ENCODE measurements at regions of chr22 and their contacts with region 1.

Region 1: GRCh38 chr22:40044102-40044869 is 49.5 kb downstream of the FAM83F start:
- DNase-seq: peak; percentile 96 to 99 (median 98)
- H3K4me3 ChIP-seq: peak overlapping the region; percentile 88
- H3K27ac ChIP-seq: peak overlapping the region; percentile 82 to 96
- H3K4me1 ChIP-seq: no peaks in the 10 kb centered on the region
- H3K27me3 ChIP-seq: no peaks in the 10 kb centered on the region
- CTCF ChIP-seq: no peak
- EP300 ChIP-seq: peak; percentile 5
- POLR2A ChIP-seq: peak; percentile 65

Region 2: GRCh38 chr22:40107851-40108378 is 63.6 kb after region 1 on chr22:
- intact Hi-C with region 1: no loop called
- DNase-seq: no peak
- H3K4me3 ChIP-seq: peak overlapping the region; percentile 0
- H3K27ac ChIP-seq: peak overlapping the region in 1 of 2 donors; percentile 39
- H3K4me1 ChIP-seq: peaks cover 14% of the 10 kb centered on the region
- H3K27me3 ChIP-seq: no peaks in the 10 kb centered on the region
- CTCF ChIP-seq: no peak
- EP300 ChIP-seq: no peak
- POLR2A ChIP-seq: no peak

Region 3: GRCh38 chr22:40183029-40183581 is 138.8 kb after region 1 on chr22:
- intact Hi-C with region 1: loop called in 1 of 4 experiments (anchors 10 kb)
- DNase-seq: no peak
- H3K4me3 ChIP-seq: no peak overlapping the region
- H3K27ac ChIP-seq: no peak overlapping the region
- H3K4me1 ChIP-seq: peaks cover 16% of the 10 kb centered on the region
- H3K27me3 ChIP-seq: no peaks in the 10 kb centered on the region
- CTCF ChIP-seq: no peak
- EP300 ChIP-seq: no peak
- POLR2A ChIP-seq: no peak

Region 4: DNA sequence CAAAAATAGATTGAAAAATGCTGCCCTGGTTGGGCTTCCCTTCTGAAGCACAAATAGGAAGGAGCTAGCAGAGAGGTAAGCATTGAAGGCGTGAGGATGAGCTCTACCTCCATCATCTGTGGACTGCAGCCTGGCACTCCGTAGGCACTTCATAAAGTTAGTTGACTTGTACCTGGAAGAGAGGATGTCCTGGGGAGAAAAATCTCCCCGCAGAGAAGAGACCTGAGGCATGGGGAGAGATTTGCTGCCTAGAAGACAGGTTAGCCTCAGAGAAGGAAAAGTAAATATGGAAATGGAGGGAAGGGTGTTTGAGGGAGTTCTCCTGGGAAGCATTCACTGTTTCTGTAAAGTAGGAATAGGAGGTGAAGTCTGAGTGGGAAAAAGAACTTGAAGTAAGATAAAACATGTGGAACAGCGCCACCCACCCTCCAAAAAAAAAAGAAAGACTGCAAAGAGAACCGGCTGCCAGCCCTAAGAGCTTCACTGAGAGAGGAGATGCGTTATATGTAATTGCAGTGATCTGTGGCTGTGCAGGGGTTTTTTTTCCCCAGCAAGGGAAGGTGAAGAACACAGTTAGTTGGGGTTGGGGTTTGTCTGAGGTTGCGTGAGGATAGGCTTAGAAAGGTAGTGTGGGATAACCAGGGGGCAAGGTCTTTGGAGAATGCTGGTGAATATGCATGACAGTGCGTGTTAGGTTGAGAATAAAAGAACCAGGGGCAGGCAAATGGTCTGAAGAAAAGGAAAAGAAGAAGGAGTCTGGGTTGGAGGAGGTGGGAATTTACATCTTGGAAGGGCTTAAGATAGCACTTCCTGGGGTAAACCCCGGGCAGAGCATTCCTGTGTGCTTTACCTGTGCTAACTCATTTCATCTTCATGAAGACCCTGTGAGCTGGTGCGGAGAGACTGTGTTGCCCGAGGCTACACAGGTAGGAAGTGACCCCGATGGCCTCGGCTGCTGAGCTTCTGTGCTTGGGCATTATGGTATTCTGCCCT is 149.4 kb after region 1 on chr22:
- intact Hi-C with region 1: loop called in 2 of 4 experiments (anchors 10 kb)
- DNase-seq: peak in 1 of 5 donors; percentile 34
- H3K4me3 ChIP-seq: no peak overlapping the region
- H3K27ac ChIP-seq: no peak overlapping the region
- H3K4me1 ChIP-seq: peaks cover 25% of the 10 kb centered on the region
- H3K27me3 ChIP-seq: no peaks in the 10 kb centered on the region
- CTCF ChIP-seq: no peak
- EP300 ChIP-seq: no peak
- POLR2A ChIP-seq: no peak

Region 5: DNA sequence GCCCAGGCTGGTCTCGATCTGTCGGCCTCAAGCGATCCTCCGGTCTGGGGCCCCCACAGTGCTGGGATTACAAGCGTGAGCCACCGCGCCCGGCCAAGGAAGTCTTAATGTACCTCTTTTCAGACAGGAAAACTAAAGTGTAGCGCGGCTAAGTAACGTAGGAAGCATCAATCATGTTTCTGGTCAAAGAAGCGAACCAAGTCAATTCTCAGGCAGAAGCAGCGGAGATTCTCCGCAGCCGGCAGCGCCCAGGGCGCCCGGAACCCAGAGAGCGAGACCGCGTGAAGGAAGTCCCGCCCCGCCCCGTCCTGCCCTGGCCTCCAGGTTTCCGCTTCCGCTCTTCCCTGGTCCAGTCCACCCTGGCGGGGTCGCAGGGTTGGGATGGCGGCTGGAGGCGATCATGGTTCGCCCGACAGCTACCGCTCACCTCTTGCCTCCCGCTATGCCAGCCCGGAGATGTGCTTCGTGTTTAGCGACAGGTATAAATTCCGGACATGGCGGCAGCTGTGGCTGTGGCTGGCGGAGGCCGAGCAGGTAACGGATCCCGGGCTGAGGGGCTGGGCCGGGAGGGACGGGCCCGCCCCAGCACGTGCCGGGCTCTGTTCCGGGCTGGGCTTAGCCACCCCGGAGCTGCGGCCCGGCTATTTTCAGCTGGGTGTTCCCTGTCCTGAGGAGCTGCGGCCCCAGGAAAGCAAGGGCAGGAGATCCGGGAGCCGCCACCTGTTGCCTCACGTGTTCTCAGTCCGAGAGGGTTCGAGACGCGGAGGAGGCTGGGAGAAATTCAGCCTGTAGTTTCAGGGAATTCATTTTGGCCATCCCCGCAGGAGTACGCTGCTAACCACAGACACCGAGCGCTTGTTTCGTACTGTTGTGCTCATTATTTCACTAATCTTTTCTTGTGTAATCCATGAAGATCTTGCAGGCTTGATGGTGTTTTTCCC is 302.2 kb after region 1 on chr22 and contains the start of gene ADSL:
- intact Hi-C with region 1: loop called in 1 of 4 experiments (anchors 10 kb)
- DNase-seq: peak; percentile 84 to 92 (median 85)
- H3K4me3 ChIP-seq: peak within 1 kb of the TSS; percentile 83
- H3K27ac ChIP-seq: peak within 1 kb of the TSS; percentile 32 to 74
- H3K4me1 ChIP-seq: peaks cover 4% of the 10 kb centered on the region
- H3K27me3 ChIP-seq: no peaks in the 10 kb centered on the region
- CTCF ChIP-seq: peak in 1 of 3 donors; percentile 43
- EP300 ChIP-seq: no peak
- POLR2A ChIP-seq: peak; percentile 88
- total RNA-seq, gene ADSL: 45.1 to 63.5 (median 49.7) TPM